CD8-positive, alpha-beta T cell (primary cell): ENCODE measurements at regions of chr1 and their contacts with region 1.

Region 1: DNA sequence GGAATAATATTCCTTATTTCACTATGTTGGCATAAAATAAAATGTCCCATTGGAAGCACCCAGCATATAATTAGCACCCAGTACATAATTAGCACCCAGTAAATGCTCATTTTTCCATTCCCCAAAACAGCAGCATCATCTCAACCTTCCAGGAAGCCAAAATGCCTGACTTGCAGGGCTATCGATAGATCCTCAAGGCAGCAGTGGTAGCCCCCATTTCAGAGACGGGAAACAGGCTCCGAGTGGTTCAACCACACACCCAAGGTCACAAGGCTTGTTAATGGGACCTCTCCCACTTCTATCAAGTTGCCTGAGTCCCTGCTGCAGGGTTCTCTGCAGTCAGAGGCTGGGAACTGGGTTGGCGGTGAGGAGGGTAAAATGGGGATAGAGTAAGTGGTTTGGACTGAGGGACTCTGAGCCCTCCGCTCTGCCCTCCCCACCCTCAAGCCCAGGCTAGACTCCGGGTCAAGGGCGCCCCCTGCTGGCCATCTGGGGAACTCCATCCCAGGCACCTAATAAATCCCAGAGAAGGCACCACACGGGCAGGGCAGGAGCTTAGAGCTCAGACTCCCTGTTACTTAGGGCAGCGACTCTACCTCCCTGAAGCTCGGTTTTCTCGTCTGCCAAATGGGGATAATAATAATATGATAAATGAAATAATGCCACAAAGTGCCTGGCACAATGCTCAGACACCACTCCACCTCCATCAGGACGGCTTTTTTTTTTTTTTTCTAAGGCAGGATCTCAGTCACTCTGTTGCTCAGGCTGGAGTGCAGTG is 21.9 kb upstream of the LAPTM5 start:
- DNase-seq: peak; percentile 84 to 99 (median 90)
- ATAC-seq: peak; percentile 89
- H3K4me3 ChIP-seq: peak overlapping the region in 1 of 2 experiments; percentile 8
- H3K4me3 Mint-ChIP-seq: no peak overlapping the region
- H3K27ac ChIP-seq: no peak overlapping the region
- H3K27ac Mint-ChIP-seq: no peak overlapping the region
- H3K4me1 ChIP-seq: peaks cover 16% of the 10 kb centered on the region
- H3K4me1 Mint-ChIP-seq: peaks cover 17% of the 10 kb centered on the region
- H3K27me3 ChIP-seq: no peaks in the 10 kb centered on the region
- H3K27me3 Mint-ChIP-seq: no peaks in the 10 kb centered on the region
- CTCF ChIP-seq: peak; percentile 83

Region 2: GRCh38 chr1:30599721-30600120 is 179.8 kb before region 1 on chr1:
- CTCF ChIA-PET with region 1: no interaction called
- POLR2A ChIA-PET with region 1: no interaction called
- intact Hi-C with region 1: no loop called
- DNase-seq: no peak
- ATAC-seq: no peak
- H3K4me3 ChIP-seq: no peak overlapping the region
- H3K4me3 Mint-ChIP-seq: no peak overlapping the region
- H3K27ac ChIP-seq: no peak overlapping the region
- H3K27ac Mint-ChIP-seq: no peak overlapping the region
- H3K4me1 ChIP-seq: no peaks in the 10 kb centered on the region
- H3K4me1 Mint-ChIP-seq: no peaks in the 10 kb centered on the region
- H3K27me3 ChIP-seq: no peaks in the 10 kb centered on the region
- H3K27me3 Mint-ChIP-seq: peaks cover 18% of the 10 kb centered on the region
- CTCF ChIP-seq: no peak

Region 3: DNA sequence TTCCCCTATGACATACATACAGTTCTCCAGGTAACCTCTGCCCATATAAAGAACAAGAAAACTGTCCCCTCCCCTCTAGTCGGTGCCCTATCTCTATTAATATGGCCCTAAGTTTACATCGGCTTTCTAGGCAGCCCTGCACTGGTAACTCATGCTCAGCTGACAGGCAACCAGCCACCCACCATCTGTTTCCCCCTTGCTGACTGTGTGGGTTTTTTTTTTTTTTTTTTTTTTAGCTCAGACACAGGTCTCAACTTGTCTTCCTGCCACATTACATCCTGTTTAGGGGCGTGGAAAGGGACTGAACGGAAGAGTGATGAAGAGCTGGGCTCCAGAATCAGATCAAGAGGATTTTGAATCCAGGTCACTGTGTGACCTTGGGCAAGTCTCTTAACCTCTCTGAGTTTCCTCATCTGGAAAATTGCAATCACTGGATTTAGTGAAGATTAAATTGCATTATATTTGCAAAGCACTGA is 35.9 kb before region 1 on chr1:
- CTCF ChIA-PET with region 1: interaction called, 338 read pairs
- POLR2A ChIA-PET with region 1: interaction called, 8 read pairs
- intact Hi-C with region 1: loop called (anchors 1 kb)
- DNase-seq: peak; percentile 43 to 94 (median 75)
- ATAC-seq: peak; percentile 82
- H3K4me3 ChIP-seq: peak overlapping the region; percentile 25 to 27
- H3K4me3 Mint-ChIP-seq: peak overlapping the region; percentile 77
- H3K27ac ChIP-seq: peak overlapping the region; percentile 72 to 92
- H3K27ac Mint-ChIP-seq: peak overlapping the region; percentile 99
- H3K4me1 ChIP-seq: peaks cover 90% of the 10 kb centered on the region
- H3K4me1 Mint-ChIP-seq: peaks cover 94% of the 10 kb centered on the region
- H3K27me3 ChIP-seq: no peaks in the 10 kb centered on the region
- H3K27me3 Mint-ChIP-seq: no peaks in the 10 kb centered on the region
- CTCF ChIP-seq: no peak

Region 4: DNA sequence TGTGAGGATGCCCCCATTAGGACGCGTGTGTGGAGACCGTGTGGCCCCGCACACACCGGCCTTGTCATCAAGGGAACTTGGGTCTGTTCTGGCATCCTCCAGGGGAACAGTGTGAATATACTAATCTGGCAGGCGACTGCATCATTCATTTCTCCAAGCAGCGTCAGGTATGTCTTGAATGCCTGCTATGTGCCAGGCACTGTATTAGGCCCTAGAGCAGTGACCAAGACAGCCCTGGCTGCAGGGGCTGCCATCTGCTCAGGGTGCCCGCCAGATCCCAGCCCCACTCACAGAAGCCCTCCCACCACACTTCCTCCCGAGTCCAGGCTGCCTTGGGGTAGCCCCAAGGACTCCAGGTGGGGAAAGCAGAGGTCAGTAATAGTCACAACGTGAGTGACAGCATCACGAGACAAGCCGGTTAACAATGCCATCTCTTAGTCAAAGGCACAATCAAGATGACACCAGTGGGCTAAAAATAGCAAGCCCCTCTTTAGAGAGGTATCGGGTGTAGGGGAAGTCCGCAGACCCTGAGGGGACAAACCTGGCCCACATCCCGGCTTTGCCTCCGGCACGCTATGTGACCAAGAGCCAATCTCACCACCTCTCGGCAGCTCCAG is 14.4 kb before region 1 on chr1:
- CTCF ChIA-PET with region 1: interaction called, 338 read pairs
- POLR2A ChIA-PET with region 1: interaction called, 4 read pairs
- intact Hi-C with region 1: loop called in 1 of 2 experiments (anchors 2 kb)
- DNase-seq: no peak
- ATAC-seq: no peak
- H3K4me3 ChIP-seq: no peak overlapping the region
- H3K4me3 Mint-ChIP-seq: no peak overlapping the region
- H3K27ac ChIP-seq: no peak overlapping the region
- H3K27ac Mint-ChIP-seq: peak overlapping the region; percentile 81
- H3K4me1 ChIP-seq: peaks cover 48% of the 10 kb centered on the region
- H3K4me1 Mint-ChIP-seq: peaks cover 66% of the 10 kb centered on the region
- H3K27me3 ChIP-seq: no peaks in the 10 kb centered on the region
- H3K27me3 Mint-ChIP-seq: no peaks in the 10 kb centered on the region
- CTCF ChIP-seq: no peak

Region 5: DNA sequence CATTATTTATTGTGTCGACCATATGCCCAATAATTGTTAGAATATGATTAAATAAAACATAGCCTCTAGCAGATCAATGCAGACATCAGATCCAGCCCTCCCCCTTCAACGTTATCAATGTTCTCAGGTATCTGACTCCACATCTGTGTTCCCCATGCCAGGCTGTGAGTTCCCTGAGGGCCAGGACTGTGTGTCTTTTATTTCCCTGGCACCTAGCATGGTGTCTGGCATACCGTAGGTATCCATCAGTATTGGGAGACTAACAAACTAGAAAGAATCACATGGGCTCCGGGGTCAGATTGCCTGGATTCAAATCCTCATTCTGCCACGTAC is 80.8 kb after region 1 on chr1:
- CTCF ChIA-PET with region 1: no interaction called
- POLR2A ChIA-PET with region 1: no interaction called
- intact Hi-C with region 1: no loop called
- DNase-seq: no peak
- ATAC-seq: no peak
- H3K4me3 ChIP-seq: no peak overlapping the region
- H3K4me3 Mint-ChIP-seq: no peak overlapping the region
- H3K27ac ChIP-seq: no peak overlapping the region
- H3K27ac Mint-ChIP-seq: no peak overlapping the region
- H3K4me1 ChIP-seq: no peaks in the 10 kb centered on the region
- H3K4me1 Mint-ChIP-seq: no peaks in the 10 kb centered on the region
- H3K27me3 ChIP-seq: no peaks in the 10 kb centered on the region
- H3K27me3 Mint-ChIP-seq: peaks cover 21% of the 10 kb centered on the region
- CTCF ChIP-seq: no peak

Region 6: GRCh38 chr1:30911046-30911954 is 131.8 kb after region 1 on chr1:
- CTCF ChIA-PET with region 1: interaction called, 20 read pairs
- POLR2A ChIA-PET with region 1: no interaction called
- intact Hi-C with region 1: loop called (anchors 1 kb)
- DNase-seq: peak in 7 of 9 experiments; percentile 29 to 67 (median 47)
- ATAC-seq: no peak
- H3K4me3 ChIP-seq: no peak overlapping the region
- H3K4me3 Mint-ChIP-seq: no peak overlapping the region
- H3K27ac ChIP-seq: no peak overlapping the region
- H3K27ac Mint-ChIP-seq: no peak overlapping the region
- H3K4me1 ChIP-seq: peaks cover 16% of the 10 kb centered on the region
- H3K4me1 Mint-ChIP-seq: peaks cover 17% of the 10 kb centered on the region
- H3K27me3 ChIP-seq: peaks cover 14 to 20% of the 10 kb centered on the region in 2 experiments
- H3K27me3 Mint-ChIP-seq: peaks cover 23% of the 10 kb centered on the region
- CTCF ChIP-seq: no peak

Region 7: DNA sequence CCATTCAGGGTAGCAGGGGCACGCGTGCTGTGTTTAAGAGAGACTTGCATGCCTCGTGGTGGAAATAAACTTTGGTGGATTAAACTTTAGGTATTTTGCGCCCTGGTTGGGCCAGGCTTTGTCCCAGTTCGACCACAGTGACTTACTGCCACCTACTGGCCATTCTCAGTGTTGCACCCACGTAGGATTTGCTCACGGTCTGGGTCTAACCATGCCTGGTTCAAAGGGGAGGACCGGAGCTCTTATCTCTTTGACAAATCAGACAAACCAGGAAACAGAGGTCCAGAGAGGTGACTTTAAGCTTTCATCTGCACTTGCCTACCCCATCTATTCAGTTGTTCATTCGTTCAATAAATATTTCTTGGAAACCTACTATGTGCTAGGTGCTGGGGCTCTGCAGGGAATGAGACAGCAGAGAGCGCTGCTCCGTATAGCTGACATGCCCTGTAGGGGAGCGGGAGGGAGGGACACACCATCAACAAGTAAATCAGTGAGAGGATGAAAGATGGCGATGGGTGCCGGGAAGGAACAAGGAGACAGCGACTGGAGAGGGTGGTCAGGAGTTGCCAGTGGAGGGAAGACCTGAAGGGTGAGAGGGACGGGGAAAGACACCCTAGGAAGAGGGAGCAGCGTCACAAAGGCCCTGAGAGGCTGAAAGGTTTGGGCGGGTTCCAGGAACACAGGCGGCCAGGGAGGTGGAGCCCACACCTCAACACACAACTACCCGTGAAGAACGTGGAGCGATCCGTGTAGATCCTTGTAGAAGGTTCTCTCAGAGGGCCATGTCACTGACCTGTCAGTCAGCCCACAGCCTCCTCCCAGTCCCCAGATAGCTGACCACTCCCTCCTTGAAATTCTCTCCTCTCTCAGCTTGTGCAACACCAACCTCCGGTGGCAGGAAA is 769.7 kb after region 1 on chr1:
- CTCF ChIA-PET with region 1: no interaction called
- POLR2A ChIA-PET with region 1: no interaction called
- intact Hi-C with region 1: loop called in 1 of 2 experiments (anchors 5 kb)
- DNase-seq: peak; percentile 77 to 93 (median 84)
- ATAC-seq: peak; percentile 100
- H3K4me3 ChIP-seq: peak overlapping the region in 1 of 2 experiments; percentile 12
- H3K4me3 Mint-ChIP-seq: peak overlapping the region; percentile 30
- H3K27ac ChIP-seq: no peak overlapping the region
- H3K27ac Mint-ChIP-seq: no peak overlapping the region
- H3K4me1 ChIP-seq: peaks cover 4% of the 10 kb centered on the region
- H3K4me1 Mint-ChIP-seq: peaks cover 10% of the 10 kb centered on the region
- H3K27me3 ChIP-seq: peaks cover 0 to 2% of the 10 kb centered on the region in 2 experiments
- H3K27me3 Mint-ChIP-seq: peaks cover 9% of the 10 kb centered on the region
- CTCF ChIP-seq: peak; percentile 91